Natural killer cell (primary cell): ENCODE measurements at regions of chr14 and their contacts with region 1.

Region 1: DNA sequence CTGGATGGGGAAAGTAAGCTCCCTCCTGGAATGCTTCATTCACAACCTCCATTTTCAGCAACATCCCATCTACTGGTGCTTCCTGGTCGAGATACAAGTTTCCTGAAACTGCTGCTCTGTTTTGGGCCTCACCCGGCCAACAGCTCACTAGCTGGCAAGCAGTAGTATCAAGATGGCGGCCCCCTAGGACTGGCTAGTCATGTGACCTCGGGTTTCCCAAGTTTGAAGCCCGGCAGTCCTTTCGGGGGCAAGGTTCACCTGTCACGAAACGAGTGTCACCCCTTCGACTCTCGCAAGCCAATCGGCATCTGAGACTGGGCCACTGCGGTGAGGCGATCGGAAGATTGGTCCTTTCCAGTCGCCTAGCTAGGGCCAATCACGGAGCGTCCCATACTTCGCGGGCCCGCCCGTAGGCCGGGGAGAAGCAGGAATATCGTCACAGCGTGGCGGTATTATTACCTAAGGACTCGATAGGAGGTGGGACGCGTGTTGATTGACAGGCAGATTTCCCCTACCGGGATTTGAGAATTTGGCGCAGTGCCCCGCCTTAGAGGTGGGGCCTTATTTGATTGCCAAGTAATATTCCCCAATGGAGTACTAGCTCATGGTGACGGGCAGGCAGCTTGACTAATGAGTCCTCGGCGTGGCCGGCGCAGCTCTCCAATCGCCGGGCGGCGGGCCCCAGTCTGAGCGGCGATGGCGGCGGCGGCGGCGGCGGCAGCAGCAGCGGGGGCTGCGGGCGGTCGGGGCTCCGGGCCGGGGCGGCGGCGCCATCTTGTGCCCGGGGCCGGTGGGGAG is at the start of gene PABPN1:
- DNase-seq: peak; percentile 95 to 99
- ATAC-seq: peak; percentile 83 to 94 (median 85)
- H3K4me3 ChIP-seq: peak within 1 kb of the TSS; percentile 66
- H3K4me3 Mint-ChIP-seq: peak within 1 kb of the TSS; percentile 92
- H3K27ac ChIP-seq: peak within 1 kb of the TSS; percentile 91
- H3K27ac Mint-ChIP-seq: peak within 1 kb of the TSS; percentile 95 to 96
- H3K4me1 ChIP-seq: peaks cover 23% of the 10 kb centered on the region
- H3K4me1 Mint-ChIP-seq: peaks cover 31 to 35% of the 10 kb centered on the region in 2 donors
- H3K27me3 ChIP-seq: no peaks in the 10 kb centered on the region
- H3K27me3 Mint-ChIP-seq: no peaks in the 10 kb centered on the region
- CTCF ChIP-seq: no peak
- total RNA-seq, gene PABPN1: 226 to 261 (median 238) TPM

Region 2: DNA sequence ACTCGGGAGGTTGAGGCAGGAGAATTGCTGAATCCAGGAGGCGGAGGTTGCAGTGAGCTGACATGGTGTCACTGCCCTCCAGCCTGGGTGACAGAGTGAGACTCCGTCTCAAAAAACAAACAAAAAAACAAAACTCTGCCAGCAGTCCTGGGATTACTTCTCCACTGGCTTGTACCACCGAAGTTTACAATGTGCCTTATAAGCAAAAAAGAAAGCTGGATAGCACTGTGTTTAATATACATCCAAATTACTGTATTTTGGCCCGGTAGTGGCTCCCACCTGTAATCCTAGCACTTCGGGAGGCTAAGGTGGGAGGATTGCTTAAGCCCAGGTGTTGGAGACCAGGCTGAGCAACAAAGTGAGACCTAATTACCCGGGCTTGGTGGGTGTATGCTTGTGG is 51.8 kb before region 1 on chr14:
- intact Hi-C with region 1: loop called (anchors 10 kb)
- DNase-seq: no peak
- ATAC-seq: no peak
- H3K4me3 ChIP-seq: no peak overlapping the region
- H3K4me3 Mint-ChIP-seq: no peak overlapping the region
- H3K27ac ChIP-seq: no peak overlapping the region
- H3K27ac Mint-ChIP-seq: no peak overlapping the region
- H3K4me1 ChIP-seq: no peaks in the 10 kb centered on the region
- H3K4me1 Mint-ChIP-seq: no peaks in the 10 kb centered on the region
- H3K27me3 ChIP-seq: no peaks in the 10 kb centered on the region
- H3K27me3 Mint-ChIP-seq: peaks cover 0 to 7% of the 10 kb centered on the region in 2 donors
- CTCF ChIP-seq: no peak

Region 3: GRCh38 chr14:23286020-23286905 is 34.7 kb before region 1 on chr14 and contains the start of gene HOMEZ:
- intact Hi-C with region 1: loop called (anchors 1 kb)
- DNase-seq: peak; percentile 97
- ATAC-seq: peak; percentile 94 to 99 (median 97)
- H3K4me3 ChIP-seq: peak within 1 kb of the TSS; percentile 69
- H3K4me3 Mint-ChIP-seq: peak within 1 kb of the TSS; percentile 95
- H3K27ac ChIP-seq: peak within 1 kb of the TSS; percentile 78
- H3K27ac Mint-ChIP-seq: peak within 1 kb of the TSS; percentile 90 to 94
- H3K4me1 ChIP-seq: peaks cover 10% of the 10 kb centered on the region
- H3K4me1 Mint-ChIP-seq: peaks cover 13 to 18% of the 10 kb centered on the region in 2 donors
- H3K27me3 ChIP-seq: no peaks in the 10 kb centered on the region
- H3K27me3 Mint-ChIP-seq: no peaks in the 10 kb centered on the region
- CTCF ChIP-seq: no peak
- total RNA-seq, gene HOMEZ: 5.1 to 10.1 (median 7.0) TPM

Region 4: GRCh38 chr14:23379366-23380196 is 58.6 kb after region 1 on chr14:
- intact Hi-C with region 1: no loop called
- DNase-seq: peak in 1 of 2 donors; percentile 84
- ATAC-seq: peak; percentile 66 to 87 (median 69)
- H3K4me3 ChIP-seq: no peak overlapping the region
- H3K4me3 Mint-ChIP-seq: no peak overlapping the region
- H3K27ac ChIP-seq: no peak overlapping the region
- H3K27ac Mint-ChIP-seq: no peak overlapping the region
- H3K4me1 ChIP-seq: no peaks in the 10 kb centered on the region
- H3K4me1 Mint-ChIP-seq: no peaks in the 10 kb centered on the region
- H3K27me3 ChIP-seq: no peaks in the 10 kb centered on the region
- H3K27me3 Mint-ChIP-seq: peaks cover 0 to 4% of the 10 kb centered on the region in 2 donors
- CTCF ChIP-seq: peak; percentile 66

Region 5: DNA sequence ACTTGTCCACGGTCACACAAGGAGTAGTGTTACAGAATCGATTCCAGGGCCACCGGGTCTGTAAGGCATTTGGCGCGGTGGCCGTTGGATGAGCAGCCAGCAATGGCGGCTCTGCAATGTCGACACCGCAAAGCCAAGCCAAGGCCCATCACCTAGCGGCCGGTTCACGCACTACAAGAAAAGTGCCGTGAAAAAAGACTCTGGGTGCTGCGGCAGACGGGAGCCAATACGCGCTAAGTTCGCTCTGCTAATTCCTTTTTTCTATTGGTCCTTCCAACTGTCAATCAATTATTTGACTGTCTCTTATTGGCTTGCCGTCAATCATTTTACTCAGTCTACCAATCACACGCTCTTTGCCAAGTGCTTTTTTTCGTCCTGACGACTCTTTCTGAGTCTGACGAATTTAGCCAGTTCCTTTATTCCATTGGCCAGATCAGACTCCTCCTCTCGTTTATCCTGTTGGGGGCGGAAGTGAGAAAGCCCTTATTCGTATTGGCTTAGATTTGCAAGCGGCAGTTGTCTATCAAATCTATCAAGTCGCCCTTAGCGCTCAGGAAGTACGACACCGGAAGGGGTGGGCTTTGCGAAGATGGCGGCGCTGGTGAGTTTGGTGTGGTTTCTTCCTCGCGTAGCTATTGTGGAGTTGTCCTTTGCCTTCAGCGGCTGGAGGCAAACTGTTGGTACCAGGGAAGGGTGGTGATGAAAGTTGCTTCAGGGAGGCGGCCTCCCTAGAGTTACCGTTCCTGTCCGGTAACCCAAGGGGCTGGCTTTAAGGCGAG is 148.3 kb after region 1 on chr14 and contains the start of gene NGDN:
- intact Hi-C with region 1: loop called (anchors 1 kb)
- DNase-seq: peak; percentile 84 to 97
- ATAC-seq: peak; percentile 89 to 97 (median 90)
- H3K4me3 ChIP-seq: peak within 1 kb of the TSS; percentile 92
- H3K4me3 Mint-ChIP-seq: no peak within 1 kb of the TSS
- H3K27ac ChIP-seq: peak within 1 kb of the TSS; percentile 90
- H3K27ac Mint-ChIP-seq: no peak within 1 kb of the TSS
- H3K4me1 ChIP-seq: peaks cover 13% of the 10 kb centered on the region
- H3K4me1 Mint-ChIP-seq: peaks cover 0 to 5% of the 10 kb centered on the region in 2 donors
- H3K27me3 ChIP-seq: no peaks in the 10 kb centered on the region
- H3K27me3 Mint-ChIP-seq: peaks cover 3 to 5% of the 10 kb centered on the region in 2 donors
- CTCF ChIP-seq: peak; percentile 65
- total RNA-seq, gene NGDN: 110 to 136 (median 126) TPM